ENCODE measurements at regions of chr1 and their contacts with region 1.

Region 1: DNA sequence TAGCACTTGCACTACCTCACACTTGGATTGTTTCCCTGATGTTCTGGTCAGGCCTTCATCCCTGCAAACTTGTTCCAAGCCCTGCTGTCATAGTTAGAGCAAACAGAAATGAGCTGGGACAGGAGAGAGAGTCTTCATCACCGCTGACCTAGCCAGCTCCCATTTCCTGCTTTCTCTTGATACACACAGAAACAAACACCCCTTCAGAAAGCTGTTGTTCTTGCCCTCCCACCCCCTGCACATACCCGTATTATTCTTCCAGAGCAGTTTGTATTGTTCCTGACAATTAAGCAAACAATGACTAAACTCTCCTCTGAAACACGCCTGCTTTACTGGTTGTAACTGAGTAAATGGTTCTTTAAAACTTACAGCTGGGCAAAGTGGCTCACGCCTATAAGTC is 2.9 kb upstream of the SYT2 start:
- DNase-seq: no peak
- H3K4me3 ChIP-seq: no peak overlapping the region
- H3K4me3 Mint-ChIP-seq: no peak overlapping the region
- H3K27ac ChIP-seq: no peak overlapping the region
- H3K27ac Mint-ChIP-seq: no peak overlapping the region
- H3K4me1 ChIP-seq: no peaks in the 10 kb centered on the region
- H3K4me1 Mint-ChIP-seq: peaks cover 0 to 4% (median 0%) of the 10 kb centered on the region in 3 donors
- H3K27me3 ChIP-seq: peaks cover 25% of the 10 kb centered on the region
- H3K27me3 Mint-ChIP-seq: peaks cover 29 to 55% of the 10 kb centered on the region in 2 donors

Region 2: GRCh38 chr1:202343652-202344349 is 369.3 kb before region 1 on chr1:
- CTCF ChIA-PET with region 1: interaction called, 35 read pairs
- POLR2A ChIA-PET with region 1: no interaction called
- DNase-seq: peak in 2 of 5 donors; percentile 49 to 53
- H3K4me3 ChIP-seq: no peak overlapping the region
- H3K4me3 Mint-ChIP-seq: peak overlapping the region in 5 of 7 donors; percentile 23 to 72 (median 50)
- H3K27ac ChIP-seq: no peak overlapping the region
- H3K27ac Mint-ChIP-seq: peak overlapping the region in 5 of 8 donors; percentile 62 to 76 (median 70)
- H3K4me1 ChIP-seq: peaks cover 15% of the 10 kb centered on the region
- H3K4me1 Mint-ChIP-seq: peaks cover 26 to 40% (median 33%) of the 10 kb centered on the region in 3 donors
- H3K27me3 ChIP-seq: no peaks in the 10 kb centered on the region
- H3K27me3 Mint-ChIP-seq: peaks cover 0 to 6% of the 10 kb centered on the region in 2 donors

Region 3: GRCh38 chr1:202728951-202729350 is 15.8 kb after region 1 on chr1:
- CTCF ChIA-PET with region 1: interaction called, 16 read pairs
- POLR2A ChIA-PET with region 1: no interaction called
- DNase-seq: no peak
- H3K4me3 ChIP-seq: no peak overlapping the region
- H3K4me3 Mint-ChIP-seq: no peak overlapping the region
- H3K27ac ChIP-seq: no peak overlapping the region
- H3K27ac Mint-ChIP-seq: no peak overlapping the region
- H3K4me1 ChIP-seq: no peaks in the 10 kb centered on the region
- H3K4me1 Mint-ChIP-seq: no peaks in the 10 kb centered on the region
- H3K27me3 ChIP-seq: no peaks in the 10 kb centered on the region
- H3K27me3 Mint-ChIP-seq: no peaks in the 10 kb centered on the region

Region 4: DNA sequence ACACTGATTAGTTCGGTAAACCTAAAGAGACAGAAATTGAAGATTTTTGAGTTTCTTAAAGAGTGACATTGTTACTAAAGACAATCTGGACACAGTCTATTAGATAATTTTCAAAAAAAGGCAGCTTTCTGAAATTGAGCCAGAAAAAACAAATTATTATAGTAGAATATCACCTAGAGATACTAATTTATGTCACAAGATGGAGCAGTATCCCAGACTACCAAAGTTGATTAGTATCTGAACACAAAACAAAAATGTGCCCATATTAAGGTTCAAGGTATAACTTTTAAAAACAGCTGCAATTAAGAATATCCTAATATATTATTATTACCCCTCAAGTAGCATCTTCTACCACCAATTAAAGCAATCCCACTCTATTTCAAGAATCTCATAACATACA is 37.6 kb after region 1 on chr1:
- CTCF ChIA-PET with region 1: no interaction called
- POLR2A ChIA-PET with region 1: no interaction called
- DNase-seq: peak in 1 of 5 donors; percentile 2
- H3K4me3 ChIP-seq: no peak overlapping the region
- H3K4me3 Mint-ChIP-seq: no peak overlapping the region
- H3K27ac ChIP-seq: no peak overlapping the region
- H3K27ac Mint-ChIP-seq: no peak overlapping the region
- H3K4me1 ChIP-seq: no peaks in the 10 kb centered on the region
- H3K4me1 Mint-ChIP-seq: no peaks in the 10 kb centered on the region
- H3K27me3 ChIP-seq: no peaks in the 10 kb centered on the region
- H3K27me3 Mint-ChIP-seq: no peaks in the 10 kb centered on the region